ENCODE measurements at regions of chr1 and their contacts with region 1.

Region 1: GRCh38 chr1:83490988-83491387 is 507.9 kb downstream of the TTLL7 start:
- DNase-seq: no peak
- H3K4me3 Mint-ChIP-seq: no peak overlapping the region
- H3K27ac Mint-ChIP-seq: peak overlapping the region; percentile 68
- H3K4me1 Mint-ChIP-seq: peaks cover 73% of the 10 kb centered on the region
- H3K27me3 Mint-ChIP-seq: no peaks in the 10 kb centered on the region

Region 2: DNA sequence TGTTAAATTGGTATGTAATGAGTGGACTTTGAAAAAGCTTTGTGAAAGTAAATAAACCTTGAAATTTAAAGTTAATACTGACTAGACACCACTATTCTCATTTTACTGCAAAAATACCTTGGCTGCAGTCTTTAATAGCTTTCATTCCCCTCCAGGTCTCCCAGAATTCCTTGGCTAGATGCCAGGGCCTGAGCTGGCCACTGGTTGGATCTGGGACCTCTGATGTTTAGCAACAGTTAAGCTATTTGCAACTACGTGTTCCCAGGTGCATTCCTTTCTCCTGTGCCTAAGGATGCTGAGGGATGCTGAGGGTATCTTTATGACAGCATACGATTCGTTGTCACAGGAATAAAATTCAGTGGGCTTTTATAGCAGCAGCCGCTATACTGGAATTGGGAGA is 430.8 kb before region 1 on chr1:
- intact Hi-C with region 1: no loop called
- DNase-seq: no peak
- H3K4me3 Mint-ChIP-seq: no peak overlapping the region
- H3K27ac Mint-ChIP-seq: no peak overlapping the region
- H3K4me1 Mint-ChIP-seq: peaks cover 4% of the 10 kb centered on the region
- H3K27me3 Mint-ChIP-seq: no peaks in the 10 kb centered on the region

Region 3: GRCh38 chr1:83130886-83131691 is 359.9 kb before region 1 on chr1:
- intact Hi-C with region 1: no loop called
- DNase-seq: no peak
- H3K4me3 Mint-ChIP-seq: no peak overlapping the region
- H3K27ac Mint-ChIP-seq: no peak overlapping the region
- H3K4me1 Mint-ChIP-seq: no peaks in the 10 kb centered on the region
- H3K27me3 Mint-ChIP-seq: peaks cover 2% of the 10 kb centered on the region

Region 4: GRCh38 chr1:83500987-83501591 is 10.1 kb after region 1 on chr1:
- intact Hi-C with region 1: loop called (anchors 1 kb)
- DNase-seq: no peak
- H3K4me3 Mint-ChIP-seq: peak overlapping the region; percentile 17
- H3K27ac Mint-ChIP-seq: peak overlapping the region; percentile 56
- H3K4me1 Mint-ChIP-seq: peaks cover 50% of the 10 kb centered on the region
- H3K27me3 Mint-ChIP-seq: no peaks in the 10 kb centered on the region

Region 5: DNA sequence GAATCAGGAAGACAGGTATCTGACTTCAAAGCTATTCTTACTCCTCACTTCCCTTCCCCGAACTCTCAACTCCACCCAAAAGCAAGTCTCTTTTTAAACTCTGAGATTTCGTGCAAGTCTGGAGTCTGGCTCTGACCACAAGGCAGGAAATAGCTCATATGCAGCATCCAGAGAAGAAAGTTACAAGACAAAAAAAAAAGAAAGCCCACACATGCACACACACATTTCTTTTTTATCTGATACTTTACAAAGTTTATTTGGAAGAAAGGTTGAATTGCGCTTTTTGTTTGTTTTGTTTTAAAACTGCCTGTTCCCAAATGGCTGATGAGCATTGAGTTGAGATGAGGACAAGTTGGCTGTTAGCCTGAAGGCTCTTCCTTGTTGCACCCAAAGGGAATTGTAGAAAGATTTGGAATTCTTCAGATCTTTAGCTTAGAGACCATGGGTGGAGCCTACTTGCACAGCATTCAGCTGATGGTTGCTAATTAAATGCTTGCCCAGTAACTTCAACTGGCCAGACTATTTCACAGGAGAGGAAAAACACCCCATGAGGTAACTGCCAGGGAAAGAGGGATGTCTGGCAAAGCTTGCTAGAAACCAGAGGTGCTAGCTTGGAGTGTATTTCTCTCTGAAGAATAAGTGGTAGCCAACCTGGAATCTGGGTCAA is 17.6 kb after region 1 on chr1:
- intact Hi-C with region 1: loop called (anchors 2 kb)
- DNase-seq: peak; percentile 60
- H3K4me3 Mint-ChIP-seq: peak overlapping the region; percentile 59
- H3K27ac Mint-ChIP-seq: peak overlapping the region; percentile 92
- H3K4me1 Mint-ChIP-seq: peaks cover 53% of the 10 kb centered on the region
- H3K27me3 Mint-ChIP-seq: no peaks in the 10 kb centered on the region